ENCODE measurements at regions of chr5 and their contacts with region 1.

Region 1: GRCh38 chr5:175718401-175719108 is 60.7 kb downstream of the HRH2 start:
- DNase-seq: peak; percentile 40 to 65
- ATAC-seq: peak in 3 of 8 donors; percentile 50 to 67 (median 56)
- H3K4me3 ChIP-seq: no peak overlapping the region
- H3K27ac ChIP-seq: no peak overlapping the region
- H3K4me1 ChIP-seq: peaks cover 0 to 19% (median 0%) of the 10 kb centered on the region in 9 donors
- H3K27me3 ChIP-seq: peaks cover 0 to 9% (median 0%) of the 10 kb centered on the region in 7 donors
- CTCF ChIP-seq: peak; percentile 65 to 79 (median 72)

Region 2: DNA sequence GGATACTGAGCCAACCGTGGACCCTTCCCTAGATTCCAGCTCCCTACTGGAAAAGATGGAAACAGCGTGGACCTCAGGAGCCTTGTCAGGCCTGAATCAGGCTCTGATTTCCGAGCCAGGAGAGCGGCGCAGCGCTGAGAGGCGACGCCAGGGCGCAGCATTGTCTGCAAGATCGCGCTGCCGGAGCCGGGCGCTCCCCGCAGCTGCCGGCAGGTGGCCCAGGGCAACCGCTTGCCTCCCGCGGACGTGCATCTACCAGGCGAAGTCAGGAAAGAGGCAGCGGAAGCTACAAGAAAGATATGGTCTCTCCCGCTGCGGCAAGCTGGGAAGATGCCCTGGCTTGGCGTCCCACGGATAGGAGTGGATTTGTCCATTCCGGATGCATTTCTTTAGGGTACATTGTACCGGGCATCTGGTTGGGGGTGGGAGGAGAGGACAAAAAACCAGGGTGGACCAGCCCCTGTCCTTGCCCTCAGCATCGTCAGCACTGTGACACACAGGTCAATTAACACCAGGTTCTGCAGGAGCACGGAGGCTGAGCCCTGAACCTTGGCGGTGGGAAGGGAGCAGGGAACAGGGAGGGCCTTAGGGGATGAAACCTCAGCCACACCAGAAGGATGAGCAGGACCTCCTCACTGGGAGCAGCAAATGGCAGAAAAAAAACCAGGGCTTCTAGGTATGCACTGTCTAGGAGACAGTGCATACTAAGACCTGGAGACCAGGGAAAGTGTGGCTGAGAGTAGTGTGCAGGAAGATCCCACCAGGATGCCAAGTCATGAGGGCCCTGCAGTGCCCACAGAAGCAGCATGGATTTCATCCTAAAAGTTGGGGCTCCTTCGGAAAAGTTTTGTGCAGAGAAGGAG is 184.3 kb before region 1 on chr5:
- intact Hi-C with region 1: loop called (anchors 1 to 5 kb)
- DNase-seq: peak; percentile 70 to 81
- ATAC-seq: peak; percentile 91 to 97 (median 96)
- H3K4me3 ChIP-seq: peak overlapping the region in 2 of 10 donors; percentile 9 to 32
- H3K27ac ChIP-seq: no peak overlapping the region
- H3K4me1 ChIP-seq: peaks cover 0 to 17% (median 0%) of the 10 kb centered on the region in 9 donors
- H3K27me3 ChIP-seq: peaks cover 0 to 4% (median 0%) of the 10 kb centered on the region in 7 donors
- CTCF ChIP-seq: peak; percentile 83 to 100 (median 98)

Region 3: GRCh38 chr5:175572886-175573285 is 145.7 kb before region 1 on chr5:
- intact Hi-C with region 1: loop called in 1 of 10 experiments (anchors 10 kb)
- DNase-seq: peak in 1 of 2 donors; percentile 62
- ATAC-seq: peak; percentile 84 to 98 (median 91)
- H3K4me3 ChIP-seq: no peak overlapping the region
- H3K27ac ChIP-seq: peak overlapping the region in 9 of 10 donors; percentile 50 to 89 (median 81)
- H3K4me1 ChIP-seq: peaks cover 0 to 19% (median 6%) of the 10 kb centered on the region in 9 donors
- H3K27me3 ChIP-seq: peaks cover 0 to 6% (median 0%) of the 10 kb centered on the region in 7 donors
- CTCF ChIP-seq: no peak

Region 4: GRCh38 chr5:175590471-175590881 is 128.1 kb before region 1 on chr5:
- intact Hi-C with region 1: loop called in 1 of 10 experiments (anchors 10 kb)
- DNase-seq: no peak
- ATAC-seq: peak in 6 of 8 donors; percentile 24 to 63 (median 38)
- H3K4me3 ChIP-seq: no peak overlapping the region
- H3K27ac ChIP-seq: peak overlapping the region in 1 of 10 donors; percentile 20
- H3K4me1 ChIP-seq: peaks cover 0 to 16% (median 4%) of the 10 kb centered on the region in 9 donors
- H3K27me3 ChIP-seq: no peaks in the 10 kb centered on the region
- CTCF ChIP-seq: no peak

Region 5: DNA sequence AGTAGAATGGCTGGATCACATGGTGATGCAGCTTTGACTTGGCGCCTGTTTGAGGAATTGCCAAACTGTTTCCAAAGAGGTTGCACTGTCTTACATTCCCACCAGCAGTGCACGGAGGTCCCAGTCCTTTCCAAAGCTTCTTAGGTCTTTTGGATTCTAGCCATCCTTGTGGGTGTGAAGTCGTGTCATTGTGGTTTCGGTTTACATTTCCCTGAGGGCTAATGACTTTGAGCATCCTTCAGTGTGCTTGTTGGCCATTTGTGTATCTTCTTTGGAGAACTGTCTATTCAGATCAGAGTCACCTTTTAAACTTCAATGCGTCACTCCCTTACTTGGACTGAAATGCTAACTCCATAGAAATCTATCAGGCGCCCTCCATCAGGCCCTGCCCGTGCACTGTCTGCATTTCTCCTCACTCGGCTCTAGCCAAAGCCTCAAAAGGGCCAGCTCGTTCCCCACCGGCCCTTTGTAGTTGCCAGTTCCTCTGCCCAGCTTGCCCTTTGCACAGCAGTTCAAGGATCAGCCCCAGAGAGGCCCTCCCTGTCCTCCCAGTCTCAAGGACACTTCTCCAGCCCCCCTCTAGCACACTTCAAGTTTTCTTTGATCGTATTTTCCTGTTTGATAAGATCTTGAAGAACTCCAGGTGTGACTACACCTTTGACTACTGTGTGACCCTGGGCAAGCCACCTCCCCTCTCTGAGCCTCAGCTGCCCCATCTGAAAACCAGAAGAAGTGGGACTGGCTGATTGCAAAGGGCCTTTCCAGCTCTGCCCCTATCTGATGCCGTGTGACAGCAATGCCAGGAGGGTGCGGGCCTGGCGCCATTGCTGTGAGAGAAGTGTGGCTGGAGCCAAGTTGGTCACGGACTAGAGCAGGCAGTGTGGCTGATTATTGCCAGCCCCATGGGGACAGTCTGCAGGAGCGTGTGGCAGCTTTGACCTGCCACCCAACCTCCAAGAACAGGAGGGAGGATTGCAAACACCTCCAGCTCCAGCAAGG is 55.1 kb before region 1 on chr5:
- intact Hi-C with region 1: loop called in 4 of 10 experiments (anchors 2 to 5 kb)
- DNase-seq: peak; percentile 71 to 76
- ATAC-seq: peak; percentile 77 to 97 (median 91)
- H3K4me3 ChIP-seq: no peak overlapping the region
- H3K27ac ChIP-seq: peak overlapping the region in 9 of 10 donors; percentile 25 to 79 (median 65)
- H3K4me1 ChIP-seq: peaks cover 5 to 78% (median 40%) of the 10 kb centered on the region in 9 donors
- H3K27me3 ChIP-seq: peaks cover 0 to 12% (median 0%) of the 10 kb centered on the region in 7 donors
- CTCF ChIP-seq: no peak